Heart right ventricle (tissue), 16 donors: ENCODE measurements at regions of chr3 and their contacts with region 1.

Region 1: DNA sequence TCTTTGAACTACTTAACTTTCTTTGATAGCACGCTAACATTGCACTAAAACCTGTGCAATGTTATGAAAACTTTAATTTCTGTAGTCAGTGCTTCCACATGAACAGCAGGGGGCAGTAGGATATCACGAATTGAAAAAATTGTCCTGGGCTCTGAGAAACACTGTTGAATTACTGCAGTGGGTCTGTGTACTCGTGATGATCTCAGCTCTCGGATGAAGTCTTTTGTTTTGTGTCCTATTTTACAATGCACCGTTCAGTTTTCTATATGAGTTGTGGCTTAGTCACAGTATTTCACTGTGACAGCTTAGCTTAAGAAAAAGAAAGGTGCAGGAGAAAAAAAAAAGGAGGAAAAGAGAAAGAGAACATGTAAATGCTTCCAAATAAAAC is 141.3 kb upstream of the CCDC54 start:
- DNase-seq: peak in 1 of 2 donors; percentile 78
- ATAC-seq: peak; percentile 64 to 81 (median 72)
- H3K4me3 ChIP-seq: peak overlapping the region; percentile 22 to 61 (median 50)
- H3K27ac ChIP-seq: peak overlapping the region in 9 of 10 donors; percentile 26 to 76 (median 58)
- H3K4me1 ChIP-seq: peaks cover 0 to 25% (median 11%) of the 10 kb centered on the region in 9 donors
- H3K27me3 ChIP-seq: no peaks in the 10 kb centered on the region
- CTCF ChIP-seq: peak; percentile 79 to 94 (median 89)

Region 2: DNA sequence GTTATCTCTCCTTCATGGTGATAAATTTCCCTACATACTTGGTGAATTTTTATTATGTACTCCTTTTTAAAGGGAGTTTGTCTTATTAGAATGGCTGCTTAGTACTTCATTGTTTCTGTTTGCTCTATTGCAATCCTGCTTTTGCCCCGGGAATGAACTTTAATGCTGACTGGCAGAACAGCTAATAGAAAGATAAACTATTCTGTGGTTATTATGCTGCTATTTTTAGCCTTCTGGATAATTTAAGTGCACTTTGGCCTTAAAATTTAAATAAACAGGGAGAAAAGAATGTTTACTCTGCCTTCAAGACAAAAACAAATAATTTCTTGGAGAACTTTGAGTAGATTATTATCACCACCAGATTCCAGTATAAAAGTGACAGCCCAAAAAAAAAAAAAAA is 272.5 kb before region 1 on chr3:
- intact Hi-C with region 1: no loop called
- DNase-seq: no peak
- ATAC-seq: peak in 4 of 8 donors; percentile 38 to 79 (median 74)
- H3K4me3 ChIP-seq: peak overlapping the region in 2 of 10 donors; percentile 15 to 19
- H3K27ac ChIP-seq: peak overlapping the region in 5 of 10 donors; percentile 2 to 67 (median 35)
- H3K4me1 ChIP-seq: peaks cover 0 to 25% (median 18%) of the 10 kb centered on the region in 9 donors
- H3K27me3 ChIP-seq: no peaks in the 10 kb centered on the region
- CTCF ChIP-seq: no peak

Region 3: DNA sequence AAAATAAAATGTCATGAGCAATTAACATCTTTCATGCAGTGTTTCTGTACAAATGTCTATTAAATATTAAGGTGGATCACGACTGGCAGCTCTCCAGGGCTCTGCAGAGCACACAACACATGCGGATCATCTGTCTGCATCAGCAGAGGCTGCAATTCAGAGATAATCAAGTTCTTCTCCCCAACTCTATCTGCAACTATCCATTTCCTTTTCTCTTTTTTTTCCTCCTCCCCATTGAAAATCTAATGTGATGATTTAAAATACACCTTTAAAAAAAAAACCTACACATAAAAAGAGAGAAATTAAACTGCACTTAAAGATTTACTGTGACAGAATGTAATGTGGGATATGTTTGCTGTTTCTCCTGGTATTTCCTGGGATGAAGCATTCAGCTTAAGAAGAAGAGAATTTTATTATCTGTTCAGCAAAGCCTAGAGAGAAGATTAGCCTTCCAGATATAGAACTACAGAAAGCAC is 211.3 kb before region 1 on chr3:
- intact Hi-C with region 1: no loop called
- DNase-seq: no peak
- ATAC-seq: no peak
- H3K4me3 ChIP-seq: no peak overlapping the region
- H3K27ac ChIP-seq: no peak overlapping the region
- H3K4me1 ChIP-seq: peaks cover 0 to 10% (median 0%) of the 10 kb centered on the region in 9 donors
- H3K27me3 ChIP-seq: no peaks in the 10 kb centered on the region
- CTCF ChIP-seq: no peak

Region 4: DNA sequence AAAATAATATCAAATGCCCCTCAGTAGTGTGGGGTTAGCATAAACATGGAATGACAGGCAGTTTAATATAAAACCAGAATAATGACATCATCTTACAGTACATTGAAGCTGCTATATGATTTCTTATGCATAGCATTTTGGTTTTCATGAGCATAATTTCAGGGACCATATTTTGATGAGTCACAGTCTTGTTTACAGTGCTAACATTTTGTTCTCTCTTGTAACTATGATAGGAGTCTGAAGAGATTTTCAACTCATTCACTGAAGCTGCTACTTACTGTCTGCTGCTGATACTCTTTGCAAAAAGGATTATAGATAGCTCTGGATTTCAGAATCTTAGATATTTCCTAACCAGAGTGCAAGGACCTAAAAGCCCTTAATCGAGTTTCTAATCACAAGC is 48.7 kb after region 1 on chr3:
- intact Hi-C with region 1: no loop called
- DNase-seq: no peak
- ATAC-seq: peak in 1 of 8 donors; percentile 65
- H3K4me3 ChIP-seq: no peak overlapping the region
- H3K27ac ChIP-seq: no peak overlapping the region
- H3K4me1 ChIP-seq: peaks cover 0 to 15% (median 4%) of the 10 kb centered on the region in 9 donors
- H3K27me3 ChIP-seq: no peaks in the 10 kb centered on the region
- CTCF ChIP-seq: no peak

Region 5: GRCh38 chr3:107429320-107430181 is 193.6 kb after region 1 on chr3:
- intact Hi-C with region 1: loop called in 7 of 10 experiments (anchors 2 to 10 kb)
- DNase-seq: peak; percentile 67 to 77
- ATAC-seq: peak; percentile 72 to 92 (median 88)
- H3K4me3 ChIP-seq: peak overlapping the region; percentile 23 to 95 (median 85)
- H3K27ac ChIP-seq: peak overlapping the region; percentile 3 to 99 (median 96)
- H3K4me1 ChIP-seq: peaks cover 0 to 28% (median 16%) of the 10 kb centered on the region in 9 donors
- H3K27me3 ChIP-seq: peaks cover 0 to 15% (median 0%) of the 10 kb centered on the region in 7 donors
- CTCF ChIP-seq: peak; percentile 79 to 94 (median 91)

Region 6: GRCh38 chr3:107543666-107544065 is 307.7 kb after region 1 on chr3:
- intact Hi-C with region 1: loop called in 2 of 10 experiments (anchors 5 to 10 kb)
- DNase-seq: no peak
- ATAC-seq: no peak
- H3K4me3 ChIP-seq: no peak overlapping the region
- H3K27ac ChIP-seq: no peak overlapping the region
- H3K4me1 ChIP-seq: no peaks in the 10 kb centered on the region
- H3K27me3 ChIP-seq: no peaks in the 10 kb centered on the region
- CTCF ChIP-seq: peak in 6 of 9 donors; percentile 28 to 50 (median 30)

Region 7: GRCh38 chr3:107676469-107677309 is 440.8 kb after region 1 on chr3:
- intact Hi-C with region 1: loop called in 3 of 10 experiments (anchors 10 kb)
- DNase-seq: no peak
- ATAC-seq: peak in 3 of 8 donors; percentile 48 to 64 (median 53)
- H3K4me3 ChIP-seq: no peak overlapping the region
- H3K27ac ChIP-seq: no peak overlapping the region
- H3K4me1 ChIP-seq: peaks cover 0 to 39% (median 16%) of the 10 kb centered on the region in 9 donors
- H3K27me3 ChIP-seq: no peaks in the 10 kb centered on the region
- CTCF ChIP-seq: peak; percentile 22 to 74 (median 61)

Region 8: DNA sequence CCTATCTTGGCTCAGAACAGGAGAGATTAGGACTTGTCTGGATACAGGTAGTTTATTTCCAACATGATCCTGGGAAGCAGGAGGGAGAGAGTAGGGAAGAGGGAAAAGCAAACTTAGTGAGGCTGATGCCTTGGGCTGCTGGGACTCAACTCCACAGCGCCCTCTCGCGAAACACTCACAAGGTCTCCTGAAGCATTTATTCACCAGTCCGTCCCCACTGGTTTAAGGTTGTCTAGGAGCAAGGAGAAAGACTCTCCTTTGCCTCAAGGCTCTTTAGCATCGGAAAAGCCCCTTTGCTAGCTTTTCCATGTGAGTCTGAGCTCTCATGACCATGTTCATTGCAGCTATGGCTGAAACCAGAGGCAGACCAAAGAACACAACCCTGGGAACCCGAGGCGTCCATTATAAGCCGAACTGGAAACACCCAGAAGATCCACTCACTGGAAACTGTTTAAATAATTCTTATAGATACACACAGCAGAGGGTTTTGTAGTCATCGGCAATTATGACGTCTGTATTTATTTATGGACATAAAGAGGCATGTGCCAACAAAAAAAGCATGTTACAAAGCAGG is 610.4 kb after region 1 on chr3:
- intact Hi-C with region 1: loop called in 2 of 10 experiments (anchors 5 to 10 kb)
- DNase-seq: peak; percentile 57 to 70
- ATAC-seq: peak; percentile 51 to 88 (median 72)
- H3K4me3 ChIP-seq: no peak overlapping the region
- H3K27ac ChIP-seq: no peak overlapping the region
- H3K4me1 ChIP-seq: peaks cover 0 to 8% (median 0%) of the 10 kb centered on the region in 9 donors
- H3K27me3 ChIP-seq: no peaks in the 10 kb centered on the region
- CTCF ChIP-seq: peak in 8 of 9 donors; percentile 20 to 71 (median 64)